ENCODE measurements at regions of chr17 and their contacts with region 1.

Region 1: GRCh38 chr17:39461113-39461925 is at the start of gene CDK12:
- DNase-seq: peak; percentile 100
- H3K4me3 Mint-ChIP-seq: peak within 1 kb of the TSS; percentile 89
- H3K27ac Mint-ChIP-seq: peak within 1 kb of the TSS; percentile 98
- H3K4me1 Mint-ChIP-seq: peaks cover 6% of the 10 kb centered on the region
- H3K27me3 Mint-ChIP-seq: no peaks in the 10 kb centered on the region
- CTCF ChIP-seq: no peak
- total RNA-seq, gene CDK12: 71.1 and 71.3 TPM in 2 replicates

Region 2: DNA sequence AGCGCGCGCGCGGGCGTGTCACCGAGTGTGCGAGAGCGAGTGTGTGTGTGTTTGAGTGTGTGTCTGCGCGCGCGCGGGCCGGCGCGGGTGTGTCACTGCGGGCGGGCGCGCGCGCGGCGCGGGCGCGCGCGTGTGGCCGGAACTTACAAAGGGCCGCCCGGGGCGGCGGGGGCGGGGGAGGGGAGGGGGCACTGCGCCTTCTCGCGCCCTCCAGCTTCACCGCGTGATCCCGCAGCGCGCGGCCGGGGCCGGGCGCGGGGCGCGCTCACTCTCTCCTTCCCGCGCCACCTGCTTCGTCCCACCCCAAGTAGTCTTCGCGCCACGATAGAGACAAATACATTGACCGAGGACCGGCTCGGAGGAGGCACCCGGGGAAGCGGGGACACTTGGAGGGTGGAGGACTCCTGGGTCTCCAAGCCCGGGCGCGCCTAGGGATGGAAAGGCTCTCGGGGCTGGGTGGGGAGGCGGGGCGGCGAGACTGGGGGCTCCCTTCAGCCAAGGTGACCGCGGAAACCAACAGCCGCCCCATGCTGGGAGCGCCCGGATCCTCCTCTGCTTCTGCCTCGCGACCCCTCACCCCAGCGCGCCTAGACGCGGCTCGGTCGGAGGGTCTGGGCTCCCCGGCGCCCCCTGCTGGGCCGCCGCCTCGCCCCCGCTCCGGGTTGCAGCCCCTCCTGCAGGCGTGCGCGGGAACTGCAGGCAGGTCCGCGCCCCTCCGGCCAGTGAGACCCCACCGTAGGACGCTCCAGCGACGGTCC is 855.3 kb before region 1 on chr17 and contains the start of gene SRCIN1:
- CTCF ChIA-PET with region 1: no interaction called
- POLR2A ChIA-PET with region 1: no interaction called
- intact Hi-C with region 1: no loop called
- DNase-seq: peak; percentile 29
- H3K4me3 Mint-ChIP-seq: peak within 1 kb of the TSS; percentile 66
- H3K27ac Mint-ChIP-seq: no peak within 1 kb of the TSS
- H3K4me1 Mint-ChIP-seq: no peaks in the 10 kb centered on the region
- H3K27me3 Mint-ChIP-seq: peaks cover 40% of the 10 kb centered on the region
- CTCF ChIP-seq: peak; percentile 99
- total RNA-seq, gene SRCIN1: 5.7 and 8.6 TPM in 2 replicates

Region 3: GRCh38 chr17:39199820-39200069 is 261.6 kb before region 1 on chr17:
- CTCF ChIA-PET with region 1: no interaction called
- POLR2A ChIA-PET with region 1: interaction called, 12 read pairs
- intact Hi-C with region 1: no loop called
- DNase-seq: peak; percentile 95
- H3K4me3 Mint-ChIP-seq: peak overlapping the region; percentile 90
- H3K27ac Mint-ChIP-seq: peak overlapping the region; percentile 100
- H3K4me1 Mint-ChIP-seq: peaks cover 22% of the 10 kb centered on the region
- H3K27me3 Mint-ChIP-seq: no peaks in the 10 kb centered on the region
- CTCF ChIP-seq: no peak

Region 4: DNA sequence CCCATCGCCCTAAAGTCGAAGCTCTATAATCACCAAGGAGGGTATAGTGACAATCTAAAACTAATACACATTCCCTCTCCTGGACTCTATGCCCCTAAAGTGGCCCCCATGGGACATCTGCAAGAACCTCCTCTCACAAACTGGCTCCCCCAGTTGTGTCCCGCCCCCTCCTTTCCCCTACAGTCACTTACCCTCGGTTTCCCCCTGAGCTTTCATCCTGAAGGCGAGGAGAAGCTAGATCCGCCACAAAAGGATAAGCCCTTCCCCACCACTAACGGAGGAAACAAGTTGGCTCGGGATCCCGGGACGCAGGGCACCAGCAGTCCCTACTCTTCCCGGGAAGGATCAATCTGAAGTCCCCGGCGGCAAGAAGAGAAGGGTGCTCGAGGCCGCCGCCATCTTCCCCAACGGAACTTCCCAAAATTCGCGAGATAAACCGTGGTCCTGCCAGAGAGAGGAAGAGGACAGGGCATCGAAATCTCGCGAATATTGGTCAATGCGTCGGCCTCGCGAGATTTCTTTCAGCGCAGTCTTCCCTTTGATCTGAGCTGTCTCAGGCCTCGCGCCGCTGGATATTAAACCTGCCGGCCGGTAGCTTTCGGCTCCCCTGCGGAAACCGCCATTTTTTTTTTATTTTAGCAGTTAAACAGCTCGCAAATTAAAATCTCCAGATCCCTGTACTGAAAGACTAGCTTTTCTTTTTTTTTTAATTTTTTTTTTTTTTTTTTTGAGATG is 10.3 kb before region 1 on chr17 and contains the start of gene MED1:
- CTCF ChIA-PET with region 1: interaction called, 7 read pairs
- POLR2A ChIA-PET with region 1: interaction called, 228 read pairs
- intact Hi-C with region 1: no loop called
- DNase-seq: peak; percentile 99
- H3K4me3 Mint-ChIP-seq: peak within 1 kb of the TSS; percentile 98
- H3K27ac Mint-ChIP-seq: peak within 1 kb of the TSS; percentile 99
- H3K4me1 Mint-ChIP-seq: no peaks in the 10 kb centered on the region
- H3K27me3 Mint-ChIP-seq: no peaks in the 10 kb centered on the region
- CTCF ChIP-seq: no peak
- total RNA-seq, gene MED1: 59.0 TPM in 2 replicates

Region 5: DNA sequence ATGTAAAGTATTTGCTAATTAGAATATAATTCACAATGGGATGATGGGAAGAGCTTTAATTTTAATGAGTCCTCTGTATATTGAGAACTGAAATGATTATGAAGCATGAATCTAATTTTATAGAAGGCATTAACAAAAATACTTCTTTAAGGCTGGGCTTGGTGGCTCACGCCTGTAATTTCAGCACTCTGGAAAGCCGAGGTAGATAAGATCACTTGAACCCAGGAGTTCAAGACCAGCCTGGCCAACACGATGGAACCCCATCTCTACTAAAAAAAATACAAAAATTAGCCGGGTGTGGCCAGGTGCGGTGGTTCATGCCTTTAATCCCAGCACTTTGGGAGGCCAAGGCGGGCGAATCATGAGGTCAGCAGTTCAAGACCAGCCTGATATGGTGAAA is 12.0 kb after region 1 on chr17:
- CTCF ChIA-PET with region 1: interaction called, 3 read pairs
- POLR2A ChIA-PET with region 1: interaction called, 53 read pairs
- intact Hi-C with region 1: no loop called
- DNase-seq: no peak
- H3K4me3 Mint-ChIP-seq: no peak overlapping the region
- H3K27ac Mint-ChIP-seq: no peak overlapping the region
- H3K4me1 Mint-ChIP-seq: no peaks in the 10 kb centered on the region
- H3K27me3 Mint-ChIP-seq: no peaks in the 10 kb centered on the region
- CTCF ChIP-seq: no peak

Region 6: DNA sequence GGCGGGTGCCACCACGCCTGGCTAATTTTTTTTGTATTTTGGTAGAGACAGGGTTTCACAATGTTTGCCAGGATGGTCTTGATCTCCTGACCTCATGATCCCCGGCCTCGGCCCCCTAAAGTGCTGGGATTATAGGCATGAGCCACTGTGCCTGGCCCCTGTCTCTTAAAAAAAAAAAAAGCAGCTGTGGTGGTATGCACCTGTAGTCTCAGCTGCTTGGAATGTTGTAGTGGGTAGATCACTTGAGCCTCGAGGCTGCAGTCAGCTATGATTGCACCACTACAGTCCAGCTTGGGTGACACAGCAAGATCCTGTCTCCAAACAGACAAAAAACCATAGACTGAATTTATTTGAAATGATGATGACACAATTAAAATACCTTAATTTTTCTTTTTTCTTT is 24.2 kb after region 1 on chr17:
- CTCF ChIA-PET with region 1: no interaction called
- POLR2A ChIA-PET with region 1: interaction called, 53 read pairs
- intact Hi-C with region 1: no loop called
- DNase-seq: peak; percentile 91
- H3K4me3 Mint-ChIP-seq: no peak overlapping the region
- H3K27ac Mint-ChIP-seq: peak overlapping the region; percentile 27
- H3K4me1 Mint-ChIP-seq: no peaks in the 10 kb centered on the region
- H3K27me3 Mint-ChIP-seq: no peaks in the 10 kb centered on the region
- CTCF ChIP-seq: no peak

Region 7: DNA sequence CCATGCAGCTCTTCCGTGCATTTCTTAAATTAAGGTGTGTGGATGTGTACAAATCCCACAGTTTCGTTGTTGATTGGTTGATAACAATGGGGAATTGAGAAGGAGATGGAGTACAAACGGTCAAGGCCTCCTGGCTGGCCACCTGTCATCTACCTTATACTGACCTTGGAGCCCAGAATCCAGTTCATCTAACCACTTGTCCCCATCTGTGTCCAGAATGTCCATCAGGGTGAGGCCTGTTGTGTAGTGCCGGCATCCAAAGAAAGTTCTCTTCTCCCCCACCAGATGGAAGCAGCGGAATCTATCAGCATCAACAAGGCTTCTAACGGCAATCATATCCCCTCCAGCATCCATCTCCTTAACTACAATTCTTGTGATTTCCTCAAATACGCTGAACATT is 455.6 kb after region 1 on chr17:
- CTCF ChIA-PET with region 1: no interaction called
- POLR2A ChIA-PET with region 1: no interaction called
- intact Hi-C with region 1: no loop called
- DNase-seq: no peak
- H3K4me3 Mint-ChIP-seq: no peak overlapping the region
- H3K27ac Mint-ChIP-seq: no peak overlapping the region
- H3K4me1 Mint-ChIP-seq: no peaks in the 10 kb centered on the region
- H3K27me3 Mint-ChIP-seq: peaks cover 19% of the 10 kb centered on the region
- CTCF ChIP-seq: no peak

Measured in MCF 10A (cell line).